ENCODE measurements at regions of chr12 and their contacts with region 1.

Region 1: DNA sequence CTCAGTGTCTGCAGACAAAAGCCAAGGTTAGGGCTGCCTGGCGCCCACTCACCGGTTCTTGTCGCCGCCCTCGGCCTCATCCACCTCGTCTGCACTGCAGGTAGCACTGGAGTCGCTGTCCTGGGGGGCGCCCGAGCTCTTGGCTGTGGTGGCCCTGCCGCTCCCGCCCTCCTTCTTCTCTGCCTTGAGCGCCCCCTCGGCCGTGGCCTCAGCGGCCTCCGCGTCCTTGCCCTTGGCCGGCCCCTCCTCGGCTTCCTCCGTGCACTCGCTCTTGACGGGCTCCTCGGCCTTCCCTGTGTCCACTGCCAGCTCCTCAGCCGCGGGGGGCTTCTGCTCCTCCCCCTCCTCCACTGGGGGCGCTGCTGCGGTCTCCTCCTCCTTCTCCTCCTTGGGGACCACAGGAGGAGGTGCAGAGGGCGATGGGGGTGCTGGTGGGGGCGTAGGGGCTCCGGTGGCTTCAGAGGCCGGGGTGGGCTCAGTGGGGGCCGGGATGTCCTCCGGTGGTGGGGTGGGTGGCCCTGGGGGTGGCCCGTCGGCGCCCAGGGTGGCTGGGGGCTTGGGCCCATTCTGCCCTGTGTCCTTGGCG is 77.2 kb downstream of the RFLNA start:
- DNase-seq: no peak
- ATAC-seq: no peak
- H3K4me3 ChIP-seq: no peak overlapping the region
- H3K4me3 Mint-ChIP-seq: no peak overlapping the region
- H3K27ac ChIP-seq: no peak overlapping the region
- H3K27ac Mint-ChIP-seq: no peak overlapping the region
- H3K4me1 ChIP-seq: no peaks in the 10 kb centered on the region
- H3K4me1 Mint-ChIP-seq: no peaks in the 10 kb centered on the region
- H3K27me3 ChIP-seq: no peaks in the 10 kb centered on the region
- H3K27me3 Mint-ChIP-seq: no peaks in the 10 kb centered on the region
- CTCF ChIP-seq: no peak

Region 2: GRCh38 chr12:124385219-124385969 is 13.3 kb after region 1 on chr12:
- CTCF ChIA-PET with region 1: no interaction called
- POLR2A ChIA-PET with region 1: no interaction called
- intact Hi-C with region 1: no loop called
- DNase-seq: no peak
- ATAC-seq: no peak
- H3K4me3 ChIP-seq: no peak overlapping the region
- H3K4me3 Mint-ChIP-seq: no peak overlapping the region
- H3K27ac ChIP-seq: no peak overlapping the region
- H3K27ac Mint-ChIP-seq: no peak overlapping the region
- H3K4me1 ChIP-seq: peaks cover 15 to 26% of the 10 kb centered on the region in 2 donors
- H3K4me1 Mint-ChIP-seq: peaks cover 23% of the 10 kb centered on the region
- H3K27me3 ChIP-seq: no peaks in the 10 kb centered on the region
- H3K27me3 Mint-ChIP-seq: no peaks in the 10 kb centered on the region
- CTCF ChIP-seq: no peak

Region 3: DNA sequence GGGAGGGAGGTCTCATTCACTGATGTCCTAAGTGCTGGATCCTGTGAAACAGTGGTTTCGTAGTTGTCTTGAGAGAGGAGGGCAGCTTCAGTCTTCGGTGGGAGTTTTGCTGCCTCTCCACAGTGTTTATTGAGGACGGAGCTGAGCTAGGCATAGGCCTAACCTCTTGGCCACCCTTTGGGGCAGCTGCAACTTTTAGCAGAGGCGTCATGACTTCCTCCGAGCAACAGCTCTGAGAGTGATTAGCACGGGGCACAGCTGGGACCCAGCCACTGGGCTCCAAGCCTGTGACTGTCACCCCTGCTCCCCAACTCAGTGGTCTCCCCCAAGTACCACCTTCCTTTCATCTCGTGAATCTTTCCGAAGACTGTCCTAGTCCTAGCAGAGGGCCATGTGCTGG is 335.3 kb after region 1 on chr12:
- CTCF ChIA-PET with region 1: no interaction called
- POLR2A ChIA-PET with region 1: interaction called, 10 read pairs
- intact Hi-C with region 1: no loop called
- DNase-seq: no peak
- ATAC-seq: no peak
- H3K4me3 ChIP-seq: no peak overlapping the region
- H3K4me3 Mint-ChIP-seq: no peak overlapping the region
- H3K27ac ChIP-seq: no peak overlapping the region
- H3K27ac Mint-ChIP-seq: no peak overlapping the region
- H3K4me1 ChIP-seq: no peaks in the 10 kb centered on the region
- H3K4me1 Mint-ChIP-seq: no peaks in the 10 kb centered on the region
- H3K27me3 ChIP-seq: no peaks in the 10 kb centered on the region
- H3K27me3 Mint-ChIP-seq: no peaks in the 10 kb centered on the region
- CTCF ChIP-seq: no peak